ENCODE measurements at regions of chr10 and their contacts with region 1.

Region 1: GRCh38 chr10:62816331-62817120 is at the start of gene EGR2:
- DNase-seq: peak; percentile 92 to 98 (median 95)
- ATAC-seq: peak; percentile 85 to 86 (median 86)
- H3K4me3 ChIP-seq: peak within 1 kb of the TSS; percentile 57 to 86
- H3K4me3 Mint-ChIP-seq: peak within 1 kb of the TSS; percentile 86 to 97 (median 95)
- H3K27ac ChIP-seq: peak within 1 kb of the TSS; percentile 65
- H3K27ac Mint-ChIP-seq: peak within 1 kb of the TSS; percentile 91 to 93
- H3K4me1 ChIP-seq: peaks cover 14 to 49% of the 10 kb centered on the region in 2 experiments
- H3K4me1 Mint-ChIP-seq: peaks cover 45 to 54% (median 51%) of the 10 kb centered on the region in 3 donors
- H3K27me3 ChIP-seq: peaks cover 9 to 47% of the 10 kb centered on the region in 2 experiments
- H3K27me3 Mint-ChIP-seq: peaks cover 23 to 44% of the 10 kb centered on the region in 2 donors
- total RNA-seq, gene EGR2: 0.90 to 2.7 (median 2.5) TPM

Region 2: GRCh38 chr10:62610649-62611229 is 205.8 kb before region 1 on chr10:
- CTCF ChIA-PET with region 1: interaction called, 51 to 97 read pairs
- POLR2A ChIA-PET with region 1: no interaction called
- DNase-seq: peak; percentile 39 to 83 (median 64)
- ATAC-seq: peak; percentile 84 to 94 (median 86)
- H3K4me3 ChIP-seq: no peak overlapping the region
- H3K4me3 Mint-ChIP-seq: no peak overlapping the region
- H3K27ac ChIP-seq: no peak overlapping the region
- H3K27ac Mint-ChIP-seq: no peak overlapping the region
- H3K4me1 ChIP-seq: peaks cover 0 to 6% of the 10 kb centered on the region in 2 experiments
- H3K4me1 Mint-ChIP-seq: peaks cover 0 to 6% (median 4%) of the 10 kb centered on the region in 3 donors
- H3K27me3 ChIP-seq: no peaks in the 10 kb centered on the region
- H3K27me3 Mint-ChIP-seq: peaks cover 8 to 10% of the 10 kb centered on the region in 2 donors

Region 3: GRCh38 chr10:62681211-62681940 is 135.2 kb before region 1 on chr10:
- CTCF ChIA-PET with region 1: interaction called, 4 to 11 read pairs
- POLR2A ChIA-PET with region 1: no interaction called
- DNase-seq: peak in 34 of 35 experiments; percentile 34 to 88 (median 58)
- ATAC-seq: peak; percentile 83 to 96 (median 84)
- H3K4me3 ChIP-seq: no peak overlapping the region
- H3K4me3 Mint-ChIP-seq: peak overlapping the region in 1 of 3 donors; percentile 2
- H3K27ac ChIP-seq: peak overlapping the region; percentile 35
- H3K27ac Mint-ChIP-seq: peak overlapping the region in 1 of 2 donors; percentile 4
- H3K4me1 ChIP-seq: peaks cover 0 to 16% of the 10 kb centered on the region in 2 experiments
- H3K4me1 Mint-ChIP-seq: peaks cover 15 to 24% (median 18%) of the 10 kb centered on the region in 3 donors
- H3K27me3 ChIP-seq: no peaks in the 10 kb centered on the region
- H3K27me3 Mint-ChIP-seq: peaks cover 4% of the 10 kb centered on the region in 2 donors

Region 4: DNA sequence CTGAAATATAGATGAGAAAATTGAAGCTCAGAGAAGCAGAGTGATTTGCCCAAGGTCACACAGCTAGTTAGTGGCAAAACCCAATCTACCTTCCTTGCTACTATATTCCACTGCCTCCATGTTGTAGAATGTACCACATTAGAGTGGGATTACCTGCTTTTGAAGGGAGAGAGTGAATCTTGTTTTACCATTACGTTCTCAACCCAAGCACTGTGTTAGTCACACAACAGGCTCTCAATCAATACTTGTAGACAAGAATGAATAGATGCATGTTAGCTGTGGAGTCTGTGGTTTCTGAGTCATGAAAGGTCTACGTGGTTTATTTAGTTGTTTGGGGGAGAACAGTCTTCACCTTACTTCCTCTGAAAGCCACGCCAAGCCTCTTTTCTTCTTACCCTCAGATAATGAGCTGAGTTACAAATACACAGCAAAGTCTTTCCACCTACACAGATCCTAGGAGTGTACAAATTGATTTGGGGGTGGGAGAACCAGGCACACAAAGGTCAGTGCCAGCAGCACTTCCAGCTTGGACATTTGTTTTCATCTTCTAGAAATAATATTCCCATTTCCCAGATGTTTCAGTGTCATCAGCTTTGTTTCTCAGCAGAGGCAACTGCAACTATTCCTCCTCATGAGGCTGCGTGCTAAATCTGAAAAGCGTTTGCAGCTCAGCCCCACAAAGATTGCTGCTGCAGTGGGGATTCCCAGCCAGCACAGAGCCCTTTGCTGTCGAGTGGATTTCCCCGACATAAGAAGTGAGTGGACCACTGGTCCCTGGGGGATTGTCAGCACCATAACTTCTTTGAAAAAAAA is 83.5 kb before region 1 on chr10:
- CTCF ChIA-PET with region 1: interaction called, 3 to 13 read pairs
- POLR2A ChIA-PET with region 1: interaction called in 1 of 2 experiments, 3 read pairs
- DNase-seq: peak; percentile 4 to 86 (median 47)
- ATAC-seq: peak; percentile 92 to 93 (median 93)
- H3K4me3 ChIP-seq: peak overlapping the region in 1 of 2 donors; percentile 5
- H3K4me3 Mint-ChIP-seq: peak overlapping the region in 1 of 3 donors; percentile 49
- H3K27ac ChIP-seq: peak overlapping the region; percentile 75
- H3K27ac Mint-ChIP-seq: no peak overlapping the region
- H3K4me1 ChIP-seq: peaks cover 27 to 34% of the 10 kb centered on the region in 2 experiments
- H3K4me1 Mint-ChIP-seq: peaks cover 0 to 20% (median 14%) of the 10 kb centered on the region in 3 donors
- H3K27me3 ChIP-seq: no peaks in the 10 kb centered on the region
- H3K27me3 Mint-ChIP-seq: no peaks in the 10 kb centered on the region

Region 5: GRCh38 chr10:62804356-62805230 is 11.9 kb before region 1 on chr10 and contains the start of gene ADO:
- CTCF ChIA-PET with region 1: interaction called, 5 to 34 read pairs
- POLR2A ChIA-PET with region 1: interaction called, 5 to 8 read pairs
- DNase-seq: peak; percentile 48 to 86 (median 73)
- ATAC-seq: peak; percentile 86 to 91 (median 88)
- H3K4me3 ChIP-seq: peak within 1 kb of the TSS; percentile 66 to 98
- H3K4me3 Mint-ChIP-seq: peak within 1 kb of the TSS; percentile 91 to 98 (median 95)
- H3K27ac ChIP-seq: peak within 1 kb of the TSS; percentile 92
- H3K27ac Mint-ChIP-seq: peak within 1 kb of the TSS; percentile 95 to 99
- H3K4me1 ChIP-seq: peaks cover 13 to 20% of the 10 kb centered on the region in 2 experiments
- H3K4me1 Mint-ChIP-seq: peaks cover 37 to 46% (median 40%) of the 10 kb centered on the region in 3 donors
- H3K27me3 ChIP-seq: no peaks in the 10 kb centered on the region
- H3K27me3 Mint-ChIP-seq: no peaks in the 10 kb centered on the region
- total RNA-seq, gene ADO: 10.5 to 17.5 (median 15.6) TPM

Region 6: GRCh38 chr10:62885684-62886467 is 69.3 kb after region 1 on chr10:
- CTCF ChIA-PET with region 1: no interaction called
- POLR2A ChIA-PET with region 1: no interaction called
- DNase-seq: no peak
- ATAC-seq: no peak
- H3K4me3 ChIP-seq: no peak overlapping the region
- H3K4me3 Mint-ChIP-seq: no peak overlapping the region
- H3K27ac ChIP-seq: no peak overlapping the region
- H3K27ac Mint-ChIP-seq: no peak overlapping the region
- H3K4me1 ChIP-seq: no peaks in the 10 kb centered on the region
- H3K4me1 Mint-ChIP-seq: no peaks in the 10 kb centered on the region
- H3K27me3 ChIP-seq: peaks cover 0 to 11% of the 10 kb centered on the region in 2 experiments
- H3K27me3 Mint-ChIP-seq: peaks cover 17 to 21% of the 10 kb centered on the region in 2 donors

Region 7: DNA sequence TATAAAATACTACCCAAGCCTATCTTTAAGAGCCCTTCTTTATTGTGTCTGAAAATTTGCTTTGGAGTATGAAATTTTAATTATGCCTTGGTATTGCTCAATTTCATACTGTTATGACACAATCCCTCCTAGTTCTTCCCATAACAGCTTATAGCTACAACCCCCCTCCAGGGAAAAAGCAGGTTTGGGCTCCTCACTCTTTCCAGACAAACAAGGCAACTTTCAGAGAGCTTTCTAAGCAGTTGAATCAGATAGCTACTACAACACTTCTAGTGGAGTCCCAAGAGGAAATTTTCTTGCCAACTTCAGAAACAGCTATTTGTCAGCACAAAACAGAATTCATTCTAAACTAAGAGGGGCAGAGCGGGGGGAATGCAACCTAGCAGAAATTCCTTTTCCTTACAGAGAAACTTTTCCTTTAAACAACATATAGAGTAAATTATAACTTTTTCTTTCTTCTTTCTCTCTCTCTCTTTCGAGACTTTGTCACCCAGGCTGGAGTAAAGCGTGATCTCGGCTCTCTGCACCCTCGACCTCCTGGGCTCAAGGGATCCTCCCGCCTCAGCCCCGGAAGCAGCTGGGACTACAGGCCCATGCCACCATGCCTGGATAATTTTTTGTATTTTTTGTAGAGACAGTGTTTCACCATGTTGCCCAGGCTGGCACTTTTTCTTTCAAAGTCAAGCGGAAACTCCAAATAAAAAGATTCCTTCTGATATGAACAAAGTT is 675.2 kb after region 1 on chr10:
- CTCF ChIA-PET with region 1: no interaction called
- POLR2A ChIA-PET with region 1: no interaction called
- DNase-seq: no peak
- ATAC-seq: no peak
- H3K4me3 ChIP-seq: no peak overlapping the region
- H3K4me3 Mint-ChIP-seq: no peak overlapping the region
- H3K27ac ChIP-seq: no peak overlapping the region
- H3K27ac Mint-ChIP-seq: no peak overlapping the region
- H3K4me1 ChIP-seq: no peaks in the 10 kb centered on the region
- H3K4me1 Mint-ChIP-seq: peaks cover 12 to 19% (median 15%) of the 10 kb centered on the region in 3 donors
- H3K27me3 ChIP-seq: no peaks in the 10 kb centered on the region
- H3K27me3 Mint-ChIP-seq: no peaks in the 10 kb centered on the region

Measured in T-cell (primary cell).